ENCODE measurements at regions of chr20 and their contacts with region 1.

Region 1: GRCh38 chr20:50509935-50510705 is at the start of gene PTPN1:
- DNase-seq: peak; percentile 99
- ATAC-seq: peak; percentile 93
- H3K4me3 Mint-ChIP-seq: peak within 1 kb of the TSS; percentile 99
- H3K27ac Mint-ChIP-seq: peak within 1 kb of the TSS; percentile 92
- H3K4me1 Mint-ChIP-seq: peaks cover 47% of the 10 kb centered on the region
- H3K27me3 Mint-ChIP-seq: no peaks in the 10 kb centered on the region
- total RNA-seq, gene PTPN1: 79.0 to 92.8 TPM

Region 2: DNA sequence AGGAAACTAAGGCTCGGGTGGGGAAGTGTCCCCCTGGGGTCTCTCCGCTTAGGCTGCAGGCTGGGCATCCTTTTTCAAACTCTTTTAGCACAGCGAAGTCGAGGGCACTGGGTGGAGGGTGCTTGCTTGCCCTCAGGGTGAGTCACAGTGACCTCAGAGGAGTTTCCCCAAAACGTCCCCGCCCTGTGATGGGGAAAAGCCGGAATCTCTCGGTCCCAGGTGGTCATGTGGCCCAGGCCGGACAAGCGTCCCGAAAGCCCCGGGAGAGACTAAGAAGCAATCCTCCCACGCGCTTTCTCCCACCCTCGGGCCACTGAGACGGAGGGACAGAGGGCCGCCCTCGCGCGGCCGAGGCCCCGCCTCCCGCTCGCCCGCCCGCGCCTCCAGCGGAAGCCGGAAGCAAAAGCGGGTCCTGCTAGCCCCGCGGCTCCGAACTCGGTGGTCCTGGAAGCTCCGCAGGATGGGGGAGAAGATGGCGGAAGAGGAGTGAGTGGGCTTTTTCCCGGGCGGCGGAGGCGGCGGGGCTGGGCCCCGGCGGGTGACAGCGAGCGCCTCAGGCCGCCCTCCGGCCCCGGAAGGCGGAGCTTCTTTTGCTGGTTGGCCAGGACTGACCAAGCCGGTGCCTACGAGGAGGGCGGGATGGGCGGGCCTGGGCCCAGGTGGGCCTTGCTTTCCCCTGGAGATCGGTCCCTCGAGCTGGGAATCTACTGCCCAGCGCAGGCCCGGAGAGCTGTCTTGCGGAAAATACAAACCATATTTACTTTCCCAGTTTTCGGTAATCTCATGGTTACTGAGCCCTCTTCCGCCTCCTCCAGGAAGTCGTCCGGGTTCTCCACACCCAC is 697.4 kb before region 1 on chr20 and contains the start of gene SLC9A8:
- CTCF ChIA-PET with region 1: no interaction called
- POLR2A ChIA-PET with region 1: no interaction called
- intact Hi-C with region 1: loop called in 1 of 2 experiments (anchors 10 kb)
- DNase-seq: peak; percentile 89
- ATAC-seq: peak; percentile 92
- H3K4me3 Mint-ChIP-seq: peak within 1 kb of the TSS; percentile 94
- H3K27ac Mint-ChIP-seq: peak within 1 kb of the TSS; percentile 98
- H3K4me1 Mint-ChIP-seq: peaks cover 28% of the 10 kb centered on the region
- H3K27me3 Mint-ChIP-seq: no peaks in the 10 kb centered on the region
- total RNA-seq, gene SLC9A8: 12.6 to 16.7 TPM

Region 3: GRCh38 chr20:50491926-50492634 is 18.0 kb before region 1 on chr20:
- CTCF ChIA-PET with region 1: interaction called, 7 read pairs
- POLR2A ChIA-PET with region 1: interaction called, 7 read pairs
- intact Hi-C with region 1: loop called (anchors 1 kb)
- DNase-seq: no peak
- ATAC-seq: no peak
- H3K4me3 Mint-ChIP-seq: no peak overlapping the region
- H3K27ac Mint-ChIP-seq: peak overlapping the region; percentile 95
- H3K4me1 Mint-ChIP-seq: peaks cover 36% of the 10 kb centered on the region
- H3K27me3 Mint-ChIP-seq: no peaks in the 10 kb centered on the region

Region 4: GRCh38 chr20:50546729-50547314 is 36.7 kb after region 1 on chr20:
- CTCF ChIA-PET with region 1: interaction called, 10 read pairs
- POLR2A ChIA-PET with region 1: interaction called, 5 read pairs
- intact Hi-C with region 1: loop called in 1 of 2 experiments (anchors 1 kb)
- DNase-seq: peak; percentile 57
- ATAC-seq: peak; percentile 61
- H3K4me3 Mint-ChIP-seq: peak overlapping the region; percentile 67
- H3K27ac Mint-ChIP-seq: peak overlapping the region; percentile 95
- H3K4me1 Mint-ChIP-seq: peaks cover 72% of the 10 kb centered on the region
- H3K27me3 Mint-ChIP-seq: no peaks in the 10 kb centered on the region

Region 5: DNA sequence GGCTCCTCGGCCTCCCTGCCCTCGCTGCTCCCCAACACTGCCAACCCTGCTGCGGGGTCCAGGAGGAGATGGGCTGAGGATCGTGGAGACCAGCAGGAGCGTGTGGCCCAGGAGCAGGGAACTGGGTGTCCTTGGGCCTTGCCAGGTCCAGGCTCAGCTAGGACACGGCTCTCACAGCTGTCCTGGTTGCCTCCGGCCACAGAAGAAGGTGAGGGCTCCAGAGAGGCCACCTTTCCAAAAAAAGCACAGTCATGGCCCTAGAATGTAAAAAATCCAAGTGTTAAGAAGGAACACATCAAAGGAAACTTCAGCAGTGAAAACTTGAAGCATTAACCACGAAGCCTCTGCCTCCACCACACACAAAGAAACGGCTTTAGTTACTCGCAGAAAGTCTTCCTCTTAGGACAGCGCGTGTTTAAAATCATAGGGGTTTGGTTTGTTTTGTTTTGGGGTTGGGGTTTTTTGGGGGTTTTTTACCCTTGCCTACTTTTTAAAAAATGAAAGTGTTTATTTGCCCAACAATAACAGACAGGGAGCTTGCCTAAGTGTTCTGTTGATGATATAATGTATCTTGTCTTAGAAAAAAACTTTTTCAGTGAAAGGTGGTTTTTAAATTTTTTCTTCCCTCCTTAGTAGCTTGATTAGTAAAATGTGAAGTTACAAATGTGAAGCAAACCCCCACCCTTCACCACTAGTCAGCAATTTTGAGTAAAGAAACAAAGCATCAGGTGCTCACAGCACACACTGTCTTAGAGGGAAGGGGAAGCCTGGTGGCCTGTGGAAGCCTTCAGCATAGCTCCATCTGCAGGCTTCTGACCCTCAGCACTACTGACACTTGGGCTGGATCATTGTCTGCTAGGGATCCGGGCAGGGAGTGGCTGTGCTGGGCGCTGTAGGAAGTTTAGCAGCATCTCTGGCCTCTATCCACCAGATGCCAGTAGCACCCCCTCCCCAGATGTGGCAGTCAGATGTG is 60.0 kb after region 1 on chr20:
- CTCF ChIA-PET with region 1: interaction called, 29 read pairs
- POLR2A ChIA-PET with region 1: interaction called, 6 read pairs
- intact Hi-C with region 1: loop called (anchors 1 kb)
- DNase-seq: peak; percentile 77
- ATAC-seq: peak; percentile 92
- H3K4me3 Mint-ChIP-seq: no peak overlapping the region
- H3K27ac Mint-ChIP-seq: peak overlapping the region; percentile 77
- H3K4me1 Mint-ChIP-seq: peaks cover 82% of the 10 kb centered on the region
- H3K27me3 Mint-ChIP-seq: no peaks in the 10 kb centered on the region

Region 6: DNA sequence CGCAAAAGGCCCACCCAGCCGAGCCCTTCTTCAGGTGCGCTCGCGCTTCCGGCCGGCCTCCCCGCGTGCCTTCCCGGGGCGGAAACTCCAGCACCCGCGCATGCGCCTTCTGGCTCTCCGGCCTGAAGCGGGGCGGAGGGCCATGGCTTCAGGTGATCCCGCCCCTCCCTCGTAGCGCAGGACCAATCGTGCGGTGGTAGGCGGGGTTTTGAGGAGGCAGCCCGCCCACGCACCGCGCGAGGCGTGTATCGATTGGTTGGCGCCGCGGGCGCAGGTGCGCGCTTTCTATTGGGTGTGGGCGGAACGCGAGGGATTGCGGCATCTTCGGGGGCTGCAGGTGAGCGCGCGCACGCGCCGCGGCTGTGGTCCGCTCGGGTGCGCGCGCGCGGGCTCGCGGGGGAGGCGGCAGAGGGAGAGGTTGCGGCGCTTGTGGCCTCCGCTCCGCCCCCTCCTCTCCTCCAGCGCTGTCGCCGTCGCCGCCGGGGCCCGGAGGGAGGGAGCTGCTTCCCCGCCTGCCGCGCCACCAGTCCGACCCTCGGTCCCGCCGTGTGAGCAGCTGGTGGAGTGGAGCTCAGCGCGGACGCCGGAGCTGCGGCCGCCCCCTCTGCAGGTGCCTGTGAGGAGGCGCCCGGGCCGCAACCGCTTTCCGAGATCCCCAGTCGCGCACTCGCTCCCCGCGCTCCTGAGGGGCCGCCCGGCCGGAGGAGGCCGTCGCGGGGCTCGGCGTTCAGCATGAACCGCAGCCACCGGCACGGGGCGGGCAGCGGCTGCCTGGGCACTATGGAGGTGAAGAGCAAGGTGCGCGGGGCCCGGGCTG is 221.1 kb after region 1 on chr20 and contains the start of gene PARD6B:
- CTCF ChIA-PET with region 1: no interaction called
- POLR2A ChIA-PET with region 1: no interaction called
- intact Hi-C with region 1: loop called in 1 of 2 experiments (anchors 1 kb)
- DNase-seq: peak; percentile 100
- ATAC-seq: peak; percentile 92
- H3K4me3 Mint-ChIP-seq: peak within 1 kb of the TSS; percentile 85
- H3K27ac Mint-ChIP-seq: peak within 1 kb of the TSS; percentile 78
- H3K4me1 Mint-ChIP-seq: peaks cover 46% of the 10 kb centered on the region
- H3K27me3 Mint-ChIP-seq: no peaks in the 10 kb centered on the region
- total RNA-seq, gene PARD6B: 4.9 to 6.2 TPM

Measured in activated CD4-positive, alpha-beta T cell treated with anti-CD3 and anti-CD28 coated beads for 36 hours (primary cell).